CD14-positive monocyte (primary cell): ENCODE measurements at regions of chr9 and their contacts with region 1.

Region 1: GRCh38 chr9:73149371-73150067 is 2.1 kb upstream of the ANXA1 start:
- DNase-seq: peak; percentile 68 to 90 (median 87)
- H3K4me3 ChIP-seq: peak overlapping the region in 2 of 3 experiments; percentile 27 to 67
- H3K4me3 Mint-ChIP-seq: peak overlapping the region in 1 of 2 donors; percentile 81
- H3K27ac ChIP-seq: peak overlapping the region in 1 of 2 donors; percentile 87
- H3K27ac Mint-ChIP-seq: peak overlapping the region; percentile 90 to 99 (median 97)
- H3K4me1 ChIP-seq: peaks cover 67 to 84% of the 10 kb centered on the region in 2 donors
- H3K4me1 Mint-ChIP-seq: peaks cover 68% of the 10 kb centered on the region
- H3K27me3 ChIP-seq: no peaks in the 10 kb centered on the region
- H3K27me3 Mint-ChIP-seq: no peaks in the 10 kb centered on the region
- CTCF ChIP-seq: no peak

Region 2: GRCh38 chr9:73132034-73132776 is 17.3 kb before region 1 on chr9:
- intact Hi-C with region 1: loop called in 1 of 2 experiments (anchors 2 kb)
- DNase-seq: peak; percentile 80 to 90 (median 89)
- H3K4me3 ChIP-seq: peak overlapping the region; percentile 81 to 99 (median 89)
- H3K4me3 Mint-ChIP-seq: peak overlapping the region; percentile 89 to 94
- H3K27ac ChIP-seq: peak overlapping the region; percentile 90 to 94
- H3K27ac Mint-ChIP-seq: peak overlapping the region; percentile 95 to 98 (median 95)
- H3K4me1 ChIP-seq: peaks cover 23 to 32% of the 10 kb centered on the region in 2 donors
- H3K4me1 Mint-ChIP-seq: peaks cover 24% of the 10 kb centered on the region
- H3K27me3 ChIP-seq: no peaks in the 10 kb centered on the region
- H3K27me3 Mint-ChIP-seq: peaks cover 0 to 3% (median 0%) of the 10 kb centered on the region in 3 donors
- CTCF ChIP-seq: no peak